ENCODE measurements at regions of chr10 and their contacts with region 1.

Region 1: DNA sequence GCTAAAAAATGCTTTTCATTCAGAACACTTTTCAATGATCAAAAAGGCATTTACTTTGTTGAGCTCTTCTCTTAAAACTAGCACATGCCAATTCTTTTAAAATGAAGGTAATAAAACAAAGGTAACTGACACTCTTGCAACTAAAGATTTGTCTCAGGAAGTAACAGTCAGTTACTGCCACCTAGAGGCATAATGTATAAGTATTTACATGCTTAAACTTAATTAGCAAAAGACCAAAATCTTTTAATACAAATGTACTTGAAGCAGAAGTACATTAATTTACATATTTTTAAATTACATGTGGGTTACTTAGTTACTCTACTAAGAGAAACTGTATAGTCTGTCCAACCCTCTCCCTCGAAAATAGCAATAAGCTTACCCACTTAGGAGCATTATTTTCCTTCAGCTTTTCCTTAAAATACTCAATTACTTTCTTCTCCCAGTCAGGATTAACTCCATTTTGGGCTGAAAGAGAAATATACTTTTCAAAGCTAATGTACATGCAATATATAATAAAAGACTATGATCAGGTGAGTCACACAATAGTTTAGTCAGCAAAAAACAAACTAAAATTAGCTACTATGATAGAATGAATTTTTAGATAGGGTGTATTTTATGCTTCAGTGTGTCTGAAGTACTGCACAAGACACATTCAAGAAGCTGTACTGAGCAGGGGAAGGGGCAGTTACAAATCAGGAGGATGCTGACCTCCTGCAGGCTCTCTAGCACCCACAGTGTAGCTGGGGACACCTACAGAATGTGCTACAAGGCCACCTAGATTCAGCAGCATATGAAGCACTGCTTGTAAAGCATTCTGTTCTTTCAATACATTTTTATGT is 13.0 kb downstream of the MCMBP start:
- DNase-seq: no peak
- ATAC-seq: peak; percentile 60
- H3K4me3 ChIP-seq: no peak overlapping the region
- H3K27ac ChIP-seq: no peak overlapping the region
- H3K4me1 ChIP-seq: peaks cover 8% of the 10 kb centered on the region
- H3K27me3 ChIP-seq: no peaks in the 10 kb centered on the region
- CTCF ChIP-seq: peak; percentile 36 to 70 (median 57); a peak in 5 of 6 replicates
- EP300 ChIP-seq: no peak
- POLR2A ChIP-seq: no peak
- RAD21 ChIP-seq: peak; percentile 70

Region 2: GRCh38 chr10:119608316-119609155 is 251.1 kb before region 1 on chr10:
- CTCF ChIA-PET with region 1: interaction called, 17 read pairs
- POLR2A ChIA-PET with region 1: no interaction called
- RAD21 ChIA-PET with region 1: no interaction called
- SMC1A ChIA-PET with region 1: interaction called, 5 read pairs
- in situ Hi-C with region 1: no loop called
- intact Hi-C with region 1: no loop called
- DNase-seq: no peak
- ATAC-seq: peak; percentile 70
- H3K4me3 ChIP-seq: no peak overlapping the region
- H3K27ac ChIP-seq: no peak overlapping the region
- H3K4me1 ChIP-seq: no peaks in the 10 kb centered on the region
- H3K27me3 ChIP-seq: no peaks in the 10 kb centered on the region
- CTCF ChIP-seq: peak; percentile 42 to 56 (median 56); a peak in 5 of 6 replicates
- EP300 ChIP-seq: no peak
- POLR2A ChIP-seq: no peak
- RAD21 ChIP-seq: peak; percentile 55

Region 3: GRCh38 chr10:119693262-119693957 is 166.2 kb before region 1 on chr10:
- CTCF ChIA-PET with region 1: interaction called, 276 read pairs
- POLR2A ChIA-PET with region 1: no interaction called
- RAD21 ChIA-PET with region 1: interaction called, 144 read pairs
- SMC1A ChIA-PET with region 1: interaction called, 211 read pairs
- in situ Hi-C with region 1: loop called (anchors 5 kb)
- intact Hi-C with region 1: no loop called
- DNase-seq: no peak
- ATAC-seq: peak; percentile 98
- H3K4me3 ChIP-seq: no peak overlapping the region
- H3K27ac ChIP-seq: no peak overlapping the region
- H3K4me1 ChIP-seq: peaks cover 9% of the 10 kb centered on the region
- H3K27me3 ChIP-seq: no peaks in the 10 kb centered on the region
- CTCF ChIP-seq: no peak
- EP300 ChIP-seq: peak in 1 of 2 experiments; percentile 65; a peak in 2 of 4 replicates
- POLR2A ChIP-seq: no peak
- RAD21 ChIP-seq: no peak

Region 4: GRCh38 chr10:119737827-119738226 is 121.8 kb before region 1 on chr10:
- CTCF ChIA-PET with region 1: interaction called, 18 read pairs
- POLR2A ChIA-PET with region 1: no interaction called
- RAD21 ChIA-PET with region 1: interaction called, 13 read pairs
- SMC1A ChIA-PET with region 1: interaction called, 8 read pairs
- in situ Hi-C with region 1: no loop called
- intact Hi-C with region 1: no loop called
- DNase-seq: no peak
- ATAC-seq: peak; percentile 39
- H3K4me3 ChIP-seq: no peak overlapping the region
- H3K27ac ChIP-seq: no peak overlapping the region
- H3K4me1 ChIP-seq: no peaks in the 10 kb centered on the region
- H3K27me3 ChIP-seq: no peaks in the 10 kb centered on the region
- CTCF ChIP-seq: no peak
- EP300 ChIP-seq: no peak
- POLR2A ChIP-seq: no peak
- RAD21 ChIP-seq: no peak

Region 5: DNA sequence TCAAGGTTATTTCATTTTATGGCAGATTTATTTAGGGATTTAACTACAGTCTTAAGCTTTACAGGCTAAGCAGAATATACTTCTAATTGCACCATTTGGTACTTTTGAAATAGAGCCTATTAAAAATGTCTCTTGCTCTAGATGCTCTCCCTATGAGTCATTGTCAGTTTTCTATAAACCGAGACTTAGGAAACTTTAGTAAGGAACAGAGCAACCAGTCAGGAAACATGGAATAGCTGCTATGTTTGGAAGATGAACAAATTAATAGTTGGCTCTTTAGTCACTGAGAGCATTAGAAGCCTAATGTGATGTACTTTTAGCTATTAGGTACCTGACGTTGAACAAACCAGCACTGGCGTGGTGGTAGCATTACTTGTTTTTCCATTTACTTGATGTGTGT is 98.5 kb before region 1 on chr10:
- CTCF ChIA-PET with region 1: interaction called, 15 read pairs
- POLR2A ChIA-PET with region 1: no interaction called
- RAD21 ChIA-PET with region 1: interaction called, 4 read pairs
- SMC1A ChIA-PET with region 1: interaction called, 17 read pairs
- in situ Hi-C with region 1: no loop called
- intact Hi-C with region 1: no loop called
- DNase-seq: no peak
- ATAC-seq: no peak
- H3K4me3 ChIP-seq: no peak overlapping the region
- H3K27ac ChIP-seq: no peak overlapping the region
- H3K4me1 ChIP-seq: no peaks in the 10 kb centered on the region
- H3K27me3 ChIP-seq: no peaks in the 10 kb centered on the region
- CTCF ChIP-seq: no peak
- EP300 ChIP-seq: no peak
- POLR2A ChIP-seq: no peak
- RAD21 ChIP-seq: no peak

Region 6: DNA sequence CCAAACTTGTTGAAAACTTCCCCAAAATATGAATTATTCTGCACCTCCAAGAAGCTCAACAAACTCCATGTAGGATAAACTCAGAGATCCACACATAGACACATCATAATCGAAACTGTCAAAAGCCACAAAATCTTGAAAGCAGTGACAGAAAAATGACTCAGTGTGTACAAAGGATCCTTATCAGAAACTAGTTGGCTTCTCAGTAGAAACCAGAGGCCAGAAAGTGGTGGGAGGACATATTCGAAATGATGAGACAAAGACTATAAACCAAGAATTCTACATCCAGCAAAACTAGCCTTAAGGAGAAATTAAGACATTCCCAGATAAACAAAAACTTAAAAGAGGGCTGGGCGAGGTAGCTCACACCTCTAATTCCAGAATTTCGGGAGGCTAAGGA is 25.5 kb before region 1 on chr10:
- CTCF ChIA-PET with region 1: interaction called, 41 read pairs
- POLR2A ChIA-PET with region 1: interaction called, 3 read pairs
- RAD21 ChIA-PET with region 1: interaction called, 7 read pairs
- SMC1A ChIA-PET with region 1: interaction called, 11 read pairs
- in situ Hi-C with region 1: no loop called
- intact Hi-C with region 1: no loop called
- DNase-seq: no peak
- ATAC-seq: peak; percentile 67
- H3K4me3 ChIP-seq: no peak overlapping the region
- H3K27ac ChIP-seq: no peak overlapping the region
- H3K4me1 ChIP-seq: no peaks in the 10 kb centered on the region
- H3K27me3 ChIP-seq: no peaks in the 10 kb centered on the region
- CTCF ChIP-seq: no peak
- EP300 ChIP-seq: no peak
- POLR2A ChIP-seq: no peak
- RAD21 ChIP-seq: no peak

Region 7: GRCh38 chr10:119892188-119893065 is 32.8 kb after region 1 on chr10 and contains the start of gene SEC23IP:
- CTCF ChIA-PET with region 1: interaction called, 10 read pairs
- POLR2A ChIA-PET with region 1: no interaction called
- RAD21 ChIA-PET with region 1: interaction called, 3 read pairs
- SMC1A ChIA-PET with region 1: interaction called, 4 read pairs
- in situ Hi-C with region 1: no loop called
- intact Hi-C with region 1: no loop called
- DNase-seq: peak; percentile 93
- ATAC-seq: peak; percentile 98
- H3K4me3 ChIP-seq: peak within 1 kb of the TSS; percentile 80
- H3K27ac ChIP-seq: peak within 1 kb of the TSS; percentile 64
- H3K4me1 ChIP-seq: no peaks in the 10 kb centered on the region
- H3K27me3 ChIP-seq: no peaks in the 10 kb centered on the region
- CTCF ChIP-seq: no peak
- EP300 ChIP-seq: no peak; a peak in 1 of 4 replicates
- POLR2A ChIP-seq: peak; percentile 96
- RAD21 ChIP-seq: no peak
- polyA plus RNA-seq, gene SEC23IP: 15.1 to 20.8 TPM